ENCODE measurements at regions of chr5 and their contacts with region 1.

Region 1: GRCh38 chr5:134577796-134578363 is 52.4 kb downstream of the JADE2 start:
- DNase-seq: peak; percentile 86
- CTCF ChIP-seq: peak; percentile 81

Region 2: GRCh38 chr5:134296213-134296612 is 281.7 kb before region 1 on chr5:
- in situ Hi-C with region 1: loop called (anchors 5 kb)
- DNase-seq: no peak
- CTCF ChIP-seq: no peak

Region 3: GRCh38 chr5:134435560-134435959 is 142.3 kb before region 1 on chr5:
- in situ Hi-C with region 1: no loop called
- DNase-seq: no peak
- CTCF ChIP-seq: no peak

Region 4: DNA sequence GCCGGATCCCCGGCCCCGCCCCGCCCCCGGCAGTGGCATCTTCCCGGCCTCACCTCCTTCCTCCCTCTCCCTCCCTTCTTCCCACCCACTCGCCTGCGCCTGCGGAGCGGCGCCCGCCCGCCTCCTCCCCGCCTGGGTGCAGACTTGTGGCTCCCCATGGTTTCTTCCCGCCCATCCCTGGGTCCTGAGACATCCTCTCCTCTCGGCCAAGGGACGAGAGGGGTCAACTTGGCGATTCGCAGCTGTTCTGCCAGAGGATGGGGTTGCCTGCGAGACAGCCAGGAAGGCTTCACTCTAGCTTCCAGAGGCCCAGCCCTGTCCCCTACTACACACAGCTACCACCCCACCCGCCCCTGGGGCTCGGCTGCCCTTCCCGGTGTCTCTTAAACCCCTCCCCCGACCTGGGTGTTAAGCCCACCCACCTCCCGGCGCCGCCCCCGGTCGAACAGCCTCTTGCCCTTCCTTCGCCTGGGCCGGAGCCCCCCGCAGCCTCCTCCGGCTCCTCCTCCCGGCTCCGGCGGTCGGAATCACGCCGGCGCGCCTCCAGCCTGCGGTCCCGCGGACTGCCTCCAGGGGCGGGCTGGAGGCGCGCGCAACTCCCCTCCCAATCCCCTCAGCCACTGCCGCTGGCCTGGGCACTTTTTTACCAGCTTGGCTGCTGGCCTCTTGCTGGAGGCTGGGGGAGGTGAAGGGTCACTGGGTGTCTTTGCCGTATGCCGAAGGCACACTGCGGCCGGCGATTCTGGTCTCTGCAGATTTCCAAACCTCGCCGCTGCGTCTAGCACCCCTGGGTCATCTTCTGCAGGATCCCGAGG is 50.5 kb before region 1 on chr5:
- in situ Hi-C with region 1: loop called (anchors 5 kb)
- DNase-seq: peak; percentile 91
- CTCF ChIP-seq: peak; percentile 80

Measured in GM13976 (cell line).